PC-3 (cell line): ENCODE measurements at regions of chr2 and their contacts with region 1.

Region 1: DNA sequence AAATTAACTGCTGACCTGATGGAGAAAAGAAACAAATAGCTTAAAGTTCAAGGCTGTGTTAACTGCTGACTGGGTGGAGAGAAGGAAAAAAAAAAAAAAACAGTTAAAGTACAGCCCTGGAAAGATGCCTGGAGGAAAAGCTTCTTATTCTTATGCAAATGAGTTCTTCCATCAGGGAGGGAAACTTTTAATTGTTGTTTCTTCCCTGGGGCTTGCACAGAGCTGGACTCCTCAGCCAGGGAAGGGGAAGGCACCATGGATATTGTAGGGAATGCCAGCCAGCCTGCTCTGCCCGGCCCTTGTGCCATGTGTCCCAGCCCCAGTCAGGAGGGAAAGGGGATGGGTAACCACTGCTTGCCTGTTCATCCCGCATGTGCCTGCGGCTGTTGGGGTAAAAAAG is 833.1 kb upstream of the CRIM1 start:
- DNase-seq: no peak
- ATAC-seq: no peak
- H3K4me3 ChIP-seq: no peak overlapping the region
- H3K27ac ChIP-seq: no peak overlapping the region
- H3K4me1 ChIP-seq: no peaks in the 10 kb centered on the region
- H3K27me3 ChIP-seq: no peaks in the 10 kb centered on the region
- CTCF ChIP-seq: no peak

Region 2: GRCh38 chr2:35503715-35504180 is 18.7 kb before region 1 on chr2:
- CTCF ChIA-PET with region 1: no interaction called
- POLR2A ChIA-PET with region 1: interaction called, 13 read pairs
- intact Hi-C with region 1: no loop called
- DNase-seq: peak; percentile 9
- ATAC-seq: no peak
- H3K4me3 ChIP-seq: no peak overlapping the region
- H3K27ac ChIP-seq: no peak overlapping the region
- H3K4me1 ChIP-seq: no peaks in the 10 kb centered on the region
- H3K27me3 ChIP-seq: no peaks in the 10 kb centered on the region
- CTCF ChIP-seq: no peak